Activated naive CD4-positive, alpha-beta T cell treated with anti-CD3 and anti-CD28 coated beads for 36 hours (primary cell): ENCODE measurements at regions of chr1 and their contacts with region 1.

Region 1: GRCh38 chr1:226679853-226680516 is 59.1 kb downstream of the ITPKB start:
- DNase-seq: peak; percentile 84
- H3K4me3 Mint-ChIP-seq: peak overlapping the region; percentile 67
- H3K27ac Mint-ChIP-seq: peak overlapping the region; percentile 92
- H3K4me1 Mint-ChIP-seq: peaks cover 96% of the 10 kb centered on the region
- H3K27me3 Mint-ChIP-seq: no peaks in the 10 kb centered on the region

Region 2: GRCh38 chr1:226642876-226643576 is 37.0 kb before region 1 on chr1:
- CTCF ChIA-PET with region 1: interaction called, 7 read pairs
- intact Hi-C with region 1: loop called (anchors 1 kb)
- DNase-seq: peak; percentile 80
- H3K4me3 Mint-ChIP-seq: peak overlapping the region; percentile 40
- H3K27ac Mint-ChIP-seq: peak overlapping the region; percentile 80
- H3K4me1 Mint-ChIP-seq: peaks cover 52% of the 10 kb centered on the region
- H3K27me3 Mint-ChIP-seq: no peaks in the 10 kb centered on the region

Region 3: DNA sequence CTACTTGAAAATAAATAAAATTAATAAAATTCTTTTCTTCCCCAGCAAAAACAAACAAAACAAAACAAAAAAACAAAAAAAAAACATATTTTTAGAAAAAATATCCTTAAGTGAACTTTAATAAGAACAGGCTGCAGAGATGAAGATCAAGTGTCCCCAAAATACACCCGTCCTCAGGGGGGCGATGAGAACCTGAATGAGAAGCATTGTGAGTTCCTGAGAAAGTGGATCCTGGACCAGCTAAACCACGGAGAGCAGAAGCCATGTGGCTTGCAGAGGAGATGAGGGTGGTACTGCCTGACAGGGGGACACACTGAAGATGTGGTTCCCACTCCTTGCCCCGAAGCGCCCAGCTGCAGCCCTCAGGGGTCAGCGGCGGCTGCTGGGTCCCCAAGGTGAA is 30.2 kb before region 1 on chr1:
- CTCF ChIA-PET with region 1: interaction called, 7 read pairs
- intact Hi-C with region 1: loop called (anchors 1 kb)
- DNase-seq: peak; percentile 67
- H3K4me3 Mint-ChIP-seq: no peak overlapping the region
- H3K27ac Mint-ChIP-seq: no peak overlapping the region
- H3K4me1 Mint-ChIP-seq: peaks cover 53% of the 10 kb centered on the region
- H3K27me3 Mint-ChIP-seq: no peaks in the 10 kb centered on the region

Region 4: DNA sequence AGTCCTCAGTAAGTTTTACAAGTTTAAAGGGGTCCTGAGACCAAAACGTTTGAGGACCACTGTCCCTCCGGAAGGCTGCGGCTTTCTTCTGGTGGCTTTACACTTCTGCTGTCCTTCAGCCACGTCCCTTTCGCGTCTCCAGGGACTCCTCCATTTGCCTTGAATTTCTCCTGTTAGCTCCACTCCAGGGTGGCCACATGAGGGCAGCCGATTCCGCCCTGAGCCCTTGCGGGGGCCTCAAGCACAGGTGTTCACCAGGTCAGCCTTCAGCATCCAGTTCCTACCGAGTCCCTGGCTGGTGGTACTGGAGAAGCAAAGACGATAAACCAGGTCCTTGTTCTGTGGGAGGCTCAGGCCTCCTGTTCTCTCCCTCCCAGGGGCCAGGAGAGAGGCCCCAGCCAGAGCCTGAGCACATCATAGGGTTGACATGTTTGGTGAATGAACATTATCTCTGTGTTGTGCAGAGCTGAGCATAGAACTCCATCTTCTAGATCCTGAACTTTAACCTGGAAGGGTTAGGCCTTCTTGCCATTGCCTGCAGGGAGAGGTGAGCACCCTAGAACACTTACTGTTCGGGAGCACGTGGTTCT is 232.7 kb after region 1 on chr1:
- CTCF ChIA-PET with region 1: no interaction called
- intact Hi-C with region 1: no loop called
- DNase-seq: peak; percentile 71
- H3K4me3 Mint-ChIP-seq: no peak overlapping the region
- H3K27ac Mint-ChIP-seq: no peak overlapping the region
- H3K4me1 Mint-ChIP-seq: no peaks in the 10 kb centered on the region
- H3K27me3 Mint-ChIP-seq: peaks cover 4% of the 10 kb centered on the region